ENCODE measurements at regions of chr3 and their contacts with region 1.

Region 1: GRCh38 chr3:195850857-195851543 is 39.3 kb upstream of the MUC4 start:
- DNase-seq: peak; percentile 90
- ATAC-seq: peak; percentile 87
- H3K4me3 Mint-ChIP-seq: no peak overlapping the region
- H3K27ac Mint-ChIP-seq: no peak overlapping the region
- H3K4me1 Mint-ChIP-seq: peaks cover 12% of the 10 kb centered on the region
- H3K27me3 Mint-ChIP-seq: 0 out of 2 replicates have a peak, but pooled peaks cover 4% of the 10 kb centered on the region
- CTCF ChIP-seq: peak; percentile 100

Region 2: DNA sequence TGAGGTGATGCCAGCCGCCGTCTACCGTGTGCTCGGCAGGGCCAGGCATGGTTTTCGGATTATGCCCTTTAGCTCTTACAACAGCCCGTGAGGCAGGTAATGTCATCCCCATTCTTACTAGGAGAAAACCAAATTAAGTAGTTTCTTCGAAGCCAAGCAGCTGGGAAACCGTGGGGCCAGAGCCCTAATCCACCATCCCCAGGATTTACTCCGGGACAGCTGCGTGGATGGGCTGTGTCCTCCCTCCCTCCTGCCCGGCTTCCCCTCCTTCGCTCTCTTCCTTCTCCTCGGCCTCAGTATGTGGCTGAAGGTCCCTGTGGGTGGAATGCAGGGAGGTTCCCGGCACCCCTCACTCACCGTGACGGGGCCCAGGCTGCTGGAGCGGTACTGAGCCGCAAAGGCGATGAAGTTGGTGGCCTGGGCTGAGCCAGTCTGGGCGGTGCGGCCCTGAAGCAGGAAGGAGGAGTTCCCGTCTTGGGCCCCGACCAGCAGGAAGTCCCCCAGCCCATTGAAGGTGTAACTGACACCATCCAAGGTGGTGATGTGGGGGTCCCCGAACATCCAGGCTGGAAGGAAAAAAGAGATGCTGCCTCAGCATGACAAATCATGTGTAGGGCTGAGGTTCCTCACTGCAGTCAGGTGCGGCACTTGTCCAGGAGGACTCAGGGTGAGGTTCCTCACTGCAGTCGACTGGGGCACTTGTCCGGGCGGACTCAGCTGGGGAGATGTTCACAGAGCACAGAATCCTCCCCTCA is 87.7 kb before region 1 on chr3:
- CTCF ChIA-PET with region 1: interaction called, 11 read pairs
- POLR2A ChIA-PET with region 1: no interaction called
- DNase-seq: no peak
- ATAC-seq: peak; percentile 42; the same call in 1 of the 2 replicates
- H3K4me3 Mint-ChIP-seq: no peak overlapping the region
- H3K27ac Mint-ChIP-seq: no peak overlapping the region; the same call in 1 of the 2 replicates
- H3K4me1 Mint-ChIP-seq: peaks cover 3% of the 10 kb centered on the region; the same call in 1 of the 2 replicates
- H3K27me3 Mint-ChIP-seq: no peaks in the 10 kb centered on the region; the same call in 1 of the 2 replicates
- CTCF ChIP-seq: no peak

Region 3: GRCh38 chr3:195815169-195815771 is 35.7 kb before region 1 on chr3:
- CTCF ChIA-PET with region 1: interaction called, 20 read pairs
- POLR2A ChIA-PET with region 1: no interaction called
- DNase-seq: no peak
- ATAC-seq: no peak
- H3K4me3 Mint-ChIP-seq: no peak overlapping the region
- H3K27ac Mint-ChIP-seq: peak overlapping the region; percentile 59; the same call in 1 of the 2 replicates
- H3K4me1 Mint-ChIP-seq: peaks cover 15% of the 10 kb centered on the region
- H3K27me3 Mint-ChIP-seq: no peaks in the 10 kb centered on the region
- CTCF ChIP-seq: no peak

Region 4: DNA sequence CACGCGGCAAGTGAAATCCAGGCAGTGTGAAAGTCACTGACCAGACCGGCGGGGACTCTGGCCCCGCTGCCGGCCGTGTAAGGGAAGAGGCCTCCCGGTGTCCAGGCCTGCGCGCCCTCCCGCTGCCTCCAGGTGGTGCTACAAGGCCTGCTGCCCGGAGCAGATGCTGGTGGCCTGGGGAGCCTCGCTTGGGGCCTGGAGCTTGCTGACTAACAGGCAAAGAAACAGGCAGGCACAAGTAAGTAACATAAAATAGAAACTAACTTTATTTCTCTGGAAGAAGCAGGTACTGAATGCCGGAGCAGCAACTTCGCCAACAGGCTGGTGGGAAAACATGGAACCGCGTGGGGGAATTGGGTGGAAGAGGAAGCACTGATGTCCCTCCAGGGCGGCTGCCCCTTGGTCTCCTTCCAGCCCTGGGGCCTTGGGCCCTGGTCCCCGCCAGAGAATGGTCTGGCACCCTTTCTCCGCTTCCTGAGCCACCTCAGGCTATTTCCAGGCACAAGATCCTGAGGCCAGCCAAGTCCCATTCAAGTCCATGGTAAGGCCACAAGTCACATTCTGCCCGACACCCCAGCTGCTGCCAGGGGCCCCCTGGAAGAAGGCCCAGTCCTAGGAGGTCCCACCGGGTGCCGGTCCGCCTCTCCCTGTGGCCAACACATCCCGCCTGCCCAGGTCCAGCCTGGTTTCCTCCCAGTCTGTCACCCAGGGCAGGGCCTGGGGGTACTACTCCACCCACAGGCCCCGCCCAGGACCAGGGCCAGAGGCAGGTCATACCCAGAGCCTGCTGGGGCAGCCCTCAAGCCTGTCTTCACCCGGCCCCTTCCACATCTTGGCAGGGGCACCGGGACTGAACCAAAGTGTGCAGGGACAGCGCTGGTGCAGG is 12.4 kb after region 1 on chr3:
- CTCF ChIA-PET with region 1: interaction called, 30 read pairs
- POLR2A ChIA-PET with region 1: no interaction called
- DNase-seq: peak; percentile 91
- ATAC-seq: peak; percentile 87
- H3K4me3 Mint-ChIP-seq: no peak overlapping the region
- H3K27ac Mint-ChIP-seq: peak overlapping the region; percentile 60; the same call in 1 of the 2 replicates
- H3K4me1 Mint-ChIP-seq: peaks cover 20% of the 10 kb centered on the region
- H3K27me3 Mint-ChIP-seq: no peaks in the 10 kb centered on the region
- CTCF ChIP-seq: peak; percentile 73

Region 5: GRCh38 chr3:195894780-195895607 is 44.0 kb after region 1 on chr3:
- CTCF ChIA-PET with region 1: interaction called, 167 read pairs
- POLR2A ChIA-PET with region 1: no interaction called
- DNase-seq: no peak
- ATAC-seq: peak; percentile 43
- H3K4me3 Mint-ChIP-seq: peak overlapping the region; percentile 83
- H3K27ac Mint-ChIP-seq: no peak overlapping the region
- H3K4me1 Mint-ChIP-seq: peaks cover 41% of the 10 kb centered on the region
- H3K27me3 Mint-ChIP-seq: no peaks in the 10 kb centered on the region
- CTCF ChIP-seq: peak; percentile 94

Region 6: DNA sequence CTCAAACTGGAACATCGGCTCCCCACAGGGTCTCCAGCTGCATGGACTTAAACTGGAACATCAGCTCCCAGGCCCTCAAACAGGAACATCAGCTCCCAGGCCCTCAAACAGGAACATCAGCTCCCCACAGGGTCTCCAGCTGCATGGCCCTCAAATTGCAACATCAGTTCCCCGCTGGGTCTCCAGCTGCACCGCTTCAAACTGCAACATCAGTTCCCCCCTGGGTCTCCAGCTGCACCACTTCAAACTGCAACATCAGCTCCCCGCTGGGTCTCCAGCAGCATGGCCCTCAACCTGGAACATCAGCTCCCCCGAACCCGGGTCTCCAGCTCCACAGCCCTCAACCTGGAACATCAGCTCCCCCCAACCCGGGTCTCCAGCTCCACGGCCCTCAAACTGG is 148.9 kb after region 1 on chr3:
- CTCF ChIA-PET with region 1: no interaction called
- POLR2A ChIA-PET with region 1: no interaction called
- DNase-seq: no peak
- ATAC-seq: no peak
- H3K4me3 Mint-ChIP-seq: no peak overlapping the region
- H3K27ac Mint-ChIP-seq: no peak overlapping the region
- H3K4me1 Mint-ChIP-seq: no peaks in the 10 kb centered on the region
- H3K27me3 Mint-ChIP-seq: peaks cover 16% of the 10 kb centered on the region
- CTCF ChIP-seq: no peak

Measured in WTC11 (cell line).